Aorta (tissue), 5 donors: ENCODE measurements at regions of chr2 and their contacts with region 1.

Region 1: GRCh38 chr2:219294356-219295351 is 14.5 kb downstream of the PTPRN start:
- DNase-seq: peak; percentile 88 to 96
- ATAC-seq: peak; percentile 93
- H3K4me3 ChIP-seq: peak overlapping the region; percentile 32 to 60
- H3K27ac ChIP-seq: peak overlapping the region in 1 of 2 donors; percentile 48
- H3K4me1 ChIP-seq: no peaks in the 10 kb centered on the region
- H3K27me3 ChIP-seq: no peaks in the 10 kb centered on the region

Region 2: GRCh38 chr2:219160186-219161017 is 134.3 kb before region 1 on chr2 and contains the start of gene NHEJ1:
- intact Hi-C with region 1: loop called in 1 of 2 experiments (anchors 1 kb)
- DNase-seq: peak; percentile 98 to 99
- ATAC-seq: peak; percentile 98
- H3K4me3 ChIP-seq: peak within 1 kb of the TSS; percentile 20 to 73
- H3K27ac ChIP-seq: peak within 1 kb of the TSS in 1 of 2 donors; percentile 83
- H3K4me1 ChIP-seq: no peaks in the 10 kb centered on the region
- H3K27me3 ChIP-seq: no peaks in the 10 kb centered on the region
- total RNA-seq, gene NHEJ1: 6.8 to 9.8 TPM

Region 3: GRCh38 chr2:219171231-219171651 is 123.4 kb before region 1 on chr2:
- intact Hi-C with region 1: loop called in 1 of 2 experiments (anchors 5 kb)
- DNase-seq: peak in 1 of 2 donors; percentile 64
- ATAC-seq: peak; percentile 81
- H3K4me3 ChIP-seq: no peak overlapping the region
- H3K27ac ChIP-seq: peak overlapping the region; percentile 11 to 72
- H3K4me1 ChIP-seq: no peaks in the 10 kb centered on the region
- H3K27me3 ChIP-seq: no peaks in the 10 kb centered on the region

Region 4: DNA sequence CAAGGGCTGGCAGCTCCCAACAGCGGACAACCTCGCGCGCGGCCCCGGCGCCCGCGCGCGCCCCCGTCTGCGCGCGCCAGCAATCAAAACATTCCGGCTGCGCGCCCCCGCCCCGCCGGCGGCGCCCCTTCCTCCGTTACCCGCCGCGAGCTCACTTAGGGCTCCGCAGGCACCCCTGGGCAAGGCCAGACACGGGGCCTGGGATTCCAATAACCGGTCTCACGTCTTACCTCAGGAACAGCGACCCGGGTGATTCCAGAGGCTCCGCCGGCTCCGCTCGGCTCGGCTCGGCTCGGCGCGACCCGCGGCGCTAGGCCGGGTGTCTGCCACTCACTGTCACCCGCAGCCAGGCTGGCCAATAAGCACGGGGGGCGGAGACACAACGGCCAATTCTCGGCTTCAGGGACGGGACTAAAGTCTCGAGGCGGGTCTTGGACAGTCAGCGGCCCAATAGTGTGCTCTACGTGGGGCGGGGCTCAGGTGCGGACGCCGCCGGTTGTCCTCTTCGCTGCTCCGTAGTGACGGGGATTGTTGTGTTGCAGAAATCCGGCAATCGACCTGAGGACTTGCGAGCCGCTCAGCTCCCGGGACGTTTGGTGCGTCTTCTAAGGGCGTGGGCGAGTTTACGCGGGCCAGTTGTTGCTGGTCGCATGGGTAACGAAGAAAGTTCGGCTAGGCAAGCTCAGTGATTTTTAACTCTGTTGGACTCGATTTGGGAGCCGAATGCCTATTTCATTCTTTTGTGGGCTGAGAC is 65.2 kb before region 1 on chr2 and contains the starts of genes ANKZF1 and ATG9A:
- intact Hi-C with region 1: loop called in 1 of 2 experiments (anchors 2 kb)
- DNase-seq: peak; percentile 99
- ATAC-seq: peak; percentile 99
- H3K4me3 ChIP-seq: peak within 1 kb of the TSS; percentile 67 to 82
- H3K27ac ChIP-seq: peak within 1 kb of the TSS; percentile 15 to 90
- H3K4me1 ChIP-seq: peaks cover 0 to 4% of the 10 kb centered on the region in 2 donors
- H3K27me3 ChIP-seq: no peaks in the 10 kb centered on the region
- total RNA-seq, gene ANKZF1: 21.4 to 55.9 TPM
- total RNA-seq, gene ATG9A: 33.9 to 36.3 TPM

Region 5: DNA sequence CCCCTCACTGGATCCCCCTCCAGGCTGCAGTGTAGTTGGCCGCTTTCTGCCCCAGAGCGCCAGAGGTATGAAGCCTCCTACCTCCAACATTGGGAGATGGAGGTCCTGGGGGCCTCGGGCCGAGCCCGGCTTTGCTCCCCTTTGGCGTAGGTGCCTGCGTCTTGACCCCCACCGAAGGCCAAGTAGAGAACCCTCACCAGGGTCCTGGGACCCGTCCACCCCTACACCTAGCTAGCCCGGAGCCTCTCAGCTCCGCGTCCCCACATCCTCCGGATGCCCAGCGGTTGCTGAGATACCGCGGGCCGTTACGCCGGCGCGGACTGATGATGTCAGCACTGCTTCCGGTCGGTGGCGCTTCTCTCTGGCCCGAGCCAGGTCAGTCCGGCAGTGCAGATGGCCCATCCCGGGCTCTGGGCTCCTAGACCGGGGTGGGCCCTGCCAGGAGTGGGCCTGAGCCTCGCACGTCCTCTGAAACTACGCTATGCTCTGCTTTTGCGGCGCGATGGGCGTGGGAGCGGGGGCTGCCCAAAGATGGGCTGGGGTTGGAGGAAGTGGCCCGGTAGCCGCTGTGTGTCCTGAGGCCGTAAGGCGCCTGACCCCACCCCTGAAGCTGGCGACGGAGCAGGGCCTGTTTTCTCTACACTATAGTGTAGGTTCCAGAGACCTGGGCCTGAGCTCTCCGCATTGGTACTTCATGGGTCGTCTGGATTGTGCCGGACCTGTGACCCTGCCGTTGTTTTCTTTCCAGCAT is 49.3 kb before region 1 on chr2 and contains the starts of genes GLB1L and STK16:
- intact Hi-C with region 1: loop called in 1 of 2 experiments (anchors 5 kb)
- DNase-seq: peak; percentile 97 to 99
- ATAC-seq: peak; percentile 95
- H3K4me3 ChIP-seq: peak within 1 kb of the TSS; percentile 37 to 75
- H3K27ac ChIP-seq: peak within 1 kb of the TSS; percentile 36 to 80
- H3K4me1 ChIP-seq: no peaks in the 10 kb centered on the region
- H3K27me3 ChIP-seq: no peaks in the 10 kb centered on the region
- total RNA-seq, gene GLB1L: 2.9 to 7.1 TPM
- total RNA-seq, gene STK16: 19.7 to 22.6 TPM

Region 6: GRCh38 chr2:219253753-219254590 is 40.7 kb before region 1 on chr2 and contains the start of gene TUBA4A:
- intact Hi-C with region 1: loop called (anchors 2 to 5 kb)
- DNase-seq: peak; percentile 90 to 95
- ATAC-seq: peak; percentile 93
- H3K4me3 ChIP-seq: peak within 1 kb of the TSS; percentile 75 to 76
- H3K27ac ChIP-seq: peak within 1 kb of the TSS; percentile 8 to 76
- H3K4me1 ChIP-seq: no peaks in the 10 kb centered on the region
- H3K27me3 ChIP-seq: no peaks in the 10 kb centered on the region
- total RNA-seq, gene TUBA4A: 44.3 to 59.2 TPM

Region 7: DNA sequence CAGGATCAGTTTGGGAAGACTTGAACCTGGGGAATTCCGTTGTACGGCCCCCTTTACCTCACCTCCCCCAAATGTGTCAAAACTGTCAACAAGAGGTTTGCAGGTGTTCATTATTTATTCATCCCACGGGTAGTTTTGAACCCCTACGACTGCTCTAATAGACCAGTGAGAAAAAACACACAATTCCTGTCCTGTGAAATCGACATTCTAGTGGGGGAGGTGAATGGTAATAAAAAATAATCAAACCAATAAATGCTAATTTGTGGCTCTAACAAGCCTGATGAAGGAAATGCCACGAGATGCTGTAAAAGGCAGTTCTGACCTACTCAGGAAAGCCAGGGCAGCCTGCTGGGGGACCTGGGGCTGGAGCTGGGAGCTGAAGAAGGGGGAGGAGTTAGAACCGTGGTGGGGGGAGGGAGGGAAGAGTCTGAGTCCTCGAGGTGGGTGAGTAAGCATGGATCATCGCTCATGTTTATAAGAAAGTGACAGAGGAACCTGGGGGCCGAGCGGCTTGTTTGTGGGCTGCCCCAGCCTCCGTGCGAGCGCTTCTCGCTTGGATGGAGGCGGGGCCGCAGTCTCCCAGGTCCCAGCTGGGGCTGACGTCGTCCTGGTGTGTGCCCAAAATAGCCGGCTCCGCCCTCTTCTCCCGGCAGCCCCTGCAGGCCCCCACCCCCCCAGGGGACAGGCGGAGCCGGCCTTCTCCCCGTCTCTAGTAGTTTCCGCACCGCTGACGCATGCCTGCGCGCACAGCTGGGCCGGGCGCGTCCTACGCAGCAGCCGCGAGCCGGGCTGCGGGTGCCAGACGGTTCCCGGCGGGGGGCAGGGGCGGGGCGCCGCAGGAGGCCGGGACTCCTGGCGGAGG is 15.8 kb before region 1 on chr2 and contains the start of gene DNAJB2:
- intact Hi-C with region 1: loop called (anchors 1 kb)
- DNase-seq: peak; percentile 100
- ATAC-seq: peak; percentile 97
- H3K4me3 ChIP-seq: peak within 1 kb of the TSS; percentile 45 to 46
- H3K27ac ChIP-seq: peak within 1 kb of the TSS; percentile 53 to 76
- H3K4me1 ChIP-seq: peaks cover 0 to 4% of the 10 kb centered on the region in 2 donors
- H3K27me3 ChIP-seq: no peaks in the 10 kb centered on the region
- total RNA-seq, gene DNAJB2: 54.4 to 54.7 TPM

Region 8: GRCh38 chr2:219619235-219619634 is 324.6 kb after region 1 on chr2:
- intact Hi-C with region 1: no loop called
- DNase-seq: no peak
- ATAC-seq: no peak
- H3K4me3 ChIP-seq: no peak overlapping the region
- H3K27ac ChIP-seq: no peak overlapping the region
- H3K4me1 ChIP-seq: no peaks in the 10 kb centered on the region
- H3K27me3 ChIP-seq: no peaks in the 10 kb centered on the region